ENCODE measurements at regions of chr15 and their contacts with region 1.

Region 1: GRCh38 chr15:67783303-67783702 is 42.0 kb upstream of the SKOR1 start:
- DNase-seq: no peak
- ATAC-seq: peak; percentile 28; the same call in 1 of the 2 replicates
- H3K4me3 Mint-ChIP-seq: no peak overlapping the region
- H3K27ac Mint-ChIP-seq: peak overlapping the region; percentile 28; the same call in 1 of the 2 replicates
- H3K4me1 Mint-ChIP-seq: peaks cover 60% of the 10 kb centered on the region
- H3K27me3 Mint-ChIP-seq: no peaks in the 10 kb centered on the region
- CTCF ChIP-seq: no peak

Region 2: DNA sequence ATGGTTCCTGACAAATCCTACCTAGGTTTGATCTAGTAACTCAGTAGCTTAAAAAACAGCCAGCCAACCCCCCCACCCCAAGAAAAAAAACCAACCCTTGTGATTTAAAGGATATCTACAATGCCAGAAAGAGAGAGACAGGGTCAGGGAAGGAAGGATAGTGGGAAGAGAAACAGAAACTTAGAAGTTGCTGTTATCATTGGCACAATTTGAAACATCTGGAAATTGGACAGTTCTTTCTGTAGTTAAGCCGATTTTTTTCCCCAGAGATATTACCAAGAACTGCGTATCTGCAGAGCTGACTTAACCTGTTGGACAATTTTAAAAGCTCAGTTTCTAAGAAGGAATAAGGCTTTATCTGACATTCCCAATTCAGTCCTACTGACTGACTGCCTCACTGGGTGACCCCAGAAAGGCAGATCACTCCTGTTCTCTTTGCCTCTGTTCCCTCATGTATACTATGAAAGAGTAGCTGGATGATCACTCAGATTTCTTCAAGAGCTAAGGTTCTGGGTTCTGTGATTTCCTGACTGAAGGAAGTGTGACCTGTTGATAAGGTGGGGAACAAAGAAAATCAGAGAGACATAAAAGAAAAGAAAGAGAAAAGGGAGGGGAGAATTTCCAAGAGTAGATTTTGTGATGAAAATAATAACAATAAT is 112.5 kb before region 1 on chr15:
- CTCF ChIA-PET with region 1: no interaction called
- POLR2A ChIA-PET with region 1: no interaction called
- DNase-seq: no peak
- ATAC-seq: no peak
- H3K4me3 Mint-ChIP-seq: no peak overlapping the region
- H3K27ac Mint-ChIP-seq: no peak overlapping the region
- H3K4me1 Mint-ChIP-seq: no peaks in the 10 kb centered on the region
- H3K27me3 Mint-ChIP-seq: no peaks in the 10 kb centered on the region
- CTCF ChIP-seq: no peak

Region 3: GRCh38 chr15:67833710-67834511 is 50.6 kb after region 1 on chr15:
- CTCF ChIA-PET with region 1: interaction called, 13 read pairs
- POLR2A ChIA-PET with region 1: no interaction called
- DNase-seq: peak; percentile 84
- ATAC-seq: peak; percentile 33
- H3K4me3 Mint-ChIP-seq: peak overlapping the region; percentile 73
- H3K27ac Mint-ChIP-seq: no peak overlapping the region
- H3K4me1 Mint-ChIP-seq: peaks cover 53% of the 10 kb centered on the region
- H3K27me3 Mint-ChIP-seq: peaks cover 100% of the 10 kb centered on the region
- CTCF ChIP-seq: peak; percentile 30